Mammary epithelial cell (primary cell): ENCODE measurements at regions of chr2 and their contacts with region 1.

Region 1: DNA sequence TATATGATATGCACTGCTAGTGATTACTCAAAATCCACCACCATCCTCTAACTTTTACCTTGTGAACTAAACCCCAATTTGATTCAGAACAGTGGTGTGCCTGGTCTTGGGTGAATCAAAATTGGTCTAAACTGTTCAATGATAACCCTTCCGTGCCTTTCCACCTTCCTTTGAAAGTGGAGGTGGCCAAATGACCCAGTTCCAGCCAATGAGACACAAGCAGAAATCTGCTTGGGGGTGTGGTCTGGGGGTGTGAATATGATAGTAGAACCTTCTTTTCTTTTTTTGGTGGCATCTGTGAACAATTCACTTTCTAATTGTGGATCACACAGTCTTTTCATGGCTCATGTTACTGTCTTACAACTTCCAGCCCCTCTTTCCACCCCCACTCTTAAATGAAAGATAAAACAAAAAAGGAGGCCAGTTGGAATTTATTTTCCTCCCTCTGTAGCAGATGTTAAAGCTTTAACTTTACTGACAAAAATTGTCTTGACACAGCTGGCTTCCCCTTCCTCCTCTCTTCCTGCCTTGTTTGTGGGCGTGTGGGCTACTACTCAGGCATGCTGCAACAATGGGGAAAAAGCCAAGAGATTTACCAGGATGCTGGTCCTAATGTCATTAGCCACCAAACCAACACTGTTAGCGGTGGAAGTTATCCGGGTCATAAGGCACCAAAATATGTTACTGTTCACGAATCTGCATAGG is 58.8 kb upstream of the ANKRD44 start:
- DNase-seq: no peak
- H3K4me3 ChIP-seq: no peak overlapping the region
- H3K27ac ChIP-seq: no peak overlapping the region
- H3K4me1 ChIP-seq: no peaks in the 10 kb centered on the region
- H3K27me3 ChIP-seq: no peaks in the 10 kb centered on the region
- CTCF ChIP-seq: no peak

Region 2: DNA sequence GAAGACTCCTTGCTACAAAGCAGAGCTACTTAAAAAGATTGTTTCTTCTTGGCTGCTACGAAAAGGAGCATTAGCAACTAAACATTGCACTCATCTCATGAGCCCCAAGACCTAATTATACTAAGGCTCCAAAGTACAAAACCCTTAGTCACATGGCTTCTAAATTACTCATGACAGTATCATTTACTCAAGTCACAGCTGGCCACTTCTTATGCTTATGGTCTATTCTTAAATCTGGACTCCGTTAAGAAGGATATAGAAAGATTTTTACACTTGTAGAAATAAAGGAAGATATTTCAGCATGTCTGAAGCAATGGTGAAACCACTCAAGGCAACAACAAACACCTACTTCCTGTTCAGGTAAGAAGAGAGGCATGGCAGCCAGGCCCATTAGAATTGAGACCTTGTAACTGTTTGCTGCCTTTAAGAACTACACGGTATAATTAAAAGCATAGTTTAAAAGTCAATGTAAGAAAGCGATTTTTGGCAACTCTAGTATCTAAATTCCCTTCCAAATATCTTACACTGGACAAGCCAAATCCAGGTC is 71.5 kb before region 1 on chr2:
- CTCF ChIA-PET with region 1: no interaction called
- dilution Hi-C with region 1: loop called (anchors 5 kb)
- in situ Hi-C with region 1: no loop called
- intact Hi-C with region 1: no loop called
- DNase-seq: no peak
- H3K4me3 ChIP-seq: no peak overlapping the region
- H3K27ac ChIP-seq: no peak overlapping the region
- H3K4me1 ChIP-seq: peaks cover 11% of the 10 kb centered on the region
- H3K27me3 ChIP-seq: no peaks in the 10 kb centered on the region
- CTCF ChIP-seq: no peak

Region 3: DNA sequence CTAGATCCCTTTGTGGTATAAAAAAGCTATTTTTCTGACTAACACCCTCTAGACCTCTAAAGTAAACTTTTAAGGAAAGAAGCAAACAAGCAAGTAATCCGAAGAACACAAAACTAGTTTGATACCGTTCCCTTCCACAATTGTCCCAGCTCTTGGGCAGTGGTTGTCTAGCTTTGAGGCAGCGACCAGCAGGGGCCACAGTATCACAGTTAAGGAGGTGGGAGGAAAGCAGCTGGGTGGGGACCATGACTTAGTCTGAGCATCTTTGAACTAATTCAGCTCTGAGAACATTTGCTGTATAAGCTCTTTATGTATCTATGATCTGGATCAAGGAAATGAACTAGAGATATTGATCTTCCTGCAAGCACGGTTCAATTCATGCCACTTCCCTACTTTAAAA is 14.4 kb after region 1 on chr2:
- CTCF ChIA-PET with region 1: no interaction called
- dilution Hi-C with region 1: no loop called
- in situ Hi-C with region 1: no loop called
- intact Hi-C with region 1: no loop called
- DNase-seq: no peak
- H3K4me3 ChIP-seq: no peak overlapping the region
- H3K27ac ChIP-seq: no peak overlapping the region
- H3K4me1 ChIP-seq: no peaks in the 10 kb centered on the region
- H3K27me3 ChIP-seq: no peaks in the 10 kb centered on the region
- CTCF ChIP-seq: no peak